Right cardiac atrium (tissue), 5 donors: ENCODE measurements at regions of chr11 and their contacts with region 1.

Region 1: GRCh38 chr11:62439785-62440602 is 21.2 kb downstream of the SCGB1A1 start:
- DNase-seq: peak; percentile 62 to 80 (median 76)
- ATAC-seq: peak; percentile 53 to 76
- H3K4me3 ChIP-seq: no peak overlapping the region
- H3K27ac ChIP-seq: peak overlapping the region; percentile 25
- H3K4me1 ChIP-seq: peaks cover 9% of the 10 kb centered on the region
- H3K27me3 ChIP-seq: no peaks in the 10 kb centered on the region

Region 2: DNA sequence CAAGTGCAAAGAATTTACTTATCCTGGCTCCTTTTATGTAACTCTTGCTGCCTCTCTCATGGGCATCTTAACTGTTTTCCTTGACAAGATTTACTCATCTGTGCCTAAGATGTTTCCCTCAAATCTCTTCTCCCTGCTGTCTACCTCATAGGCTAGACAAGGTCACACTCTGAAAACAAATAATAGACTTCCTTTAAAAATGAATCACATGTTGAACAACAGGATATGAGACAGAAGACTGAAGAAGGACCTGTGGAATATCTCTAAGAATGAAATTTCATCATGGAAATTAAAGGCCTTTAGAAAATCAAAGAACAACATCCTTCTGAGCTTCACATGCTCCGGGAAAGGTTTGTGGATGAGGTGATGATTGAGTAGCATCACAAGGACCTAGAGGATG is 176.0 kb before region 1 on chr11:
- intact Hi-C with region 1: no loop called
- DNase-seq: no peak
- ATAC-seq: no peak
- H3K4me3 ChIP-seq: no peak overlapping the region
- H3K27ac ChIP-seq: no peak overlapping the region
- H3K4me1 ChIP-seq: no peaks in the 10 kb centered on the region
- H3K27me3 ChIP-seq: no peaks in the 10 kb centered on the region

Region 3: DNA sequence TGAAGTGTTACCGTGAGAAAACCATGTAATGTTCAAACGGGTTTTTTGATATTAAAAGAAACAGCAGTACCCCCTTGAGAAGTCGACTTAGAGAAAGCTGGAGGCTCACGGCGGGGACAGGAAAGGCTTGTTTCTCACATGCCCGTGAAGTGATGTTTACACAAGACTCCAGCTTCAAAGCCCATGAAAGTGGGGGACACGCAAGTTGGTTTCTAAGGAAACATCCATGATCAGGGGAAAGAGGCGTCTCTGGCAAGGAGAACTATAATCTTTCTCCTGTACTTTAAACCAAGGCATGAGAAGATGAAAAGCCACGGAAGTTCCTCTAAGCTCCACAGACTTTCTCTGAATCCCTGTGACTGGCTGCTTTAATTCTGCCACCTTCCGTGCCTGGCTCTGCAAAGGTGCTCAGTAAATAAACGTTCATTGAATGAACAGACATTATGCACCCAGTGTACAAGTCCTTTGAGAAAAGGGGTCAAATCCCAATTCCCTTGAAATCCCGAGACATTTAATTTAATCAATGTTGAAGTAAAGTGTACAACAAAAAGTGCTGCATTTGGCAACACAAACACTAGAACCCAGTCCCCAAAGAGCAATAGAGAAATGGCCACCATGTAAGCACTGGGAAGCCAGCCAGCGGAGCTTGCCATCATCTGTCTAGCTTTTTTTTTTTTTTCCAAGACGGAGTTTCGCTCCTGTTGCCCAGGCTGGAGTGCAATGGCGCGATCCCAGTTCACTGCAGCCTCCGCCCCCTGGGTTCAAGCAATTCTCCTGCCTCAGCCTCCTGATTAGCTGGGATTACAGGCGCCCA is 48.0 kb after region 1 on chr11:
- intact Hi-C with region 1: loop called in 1 of 4 experiments (anchors 10 kb)
- DNase-seq: peak; percentile 61 to 82 (median 66)
- ATAC-seq: no peak
- H3K4me3 ChIP-seq: no peak overlapping the region
- H3K27ac ChIP-seq: no peak overlapping the region
- H3K4me1 ChIP-seq: no peaks in the 10 kb centered on the region
- H3K27me3 ChIP-seq: no peaks in the 10 kb centered on the region